ENCODE measurements at regions of chr6 and their contacts with region 1.

Region 1: DNA sequence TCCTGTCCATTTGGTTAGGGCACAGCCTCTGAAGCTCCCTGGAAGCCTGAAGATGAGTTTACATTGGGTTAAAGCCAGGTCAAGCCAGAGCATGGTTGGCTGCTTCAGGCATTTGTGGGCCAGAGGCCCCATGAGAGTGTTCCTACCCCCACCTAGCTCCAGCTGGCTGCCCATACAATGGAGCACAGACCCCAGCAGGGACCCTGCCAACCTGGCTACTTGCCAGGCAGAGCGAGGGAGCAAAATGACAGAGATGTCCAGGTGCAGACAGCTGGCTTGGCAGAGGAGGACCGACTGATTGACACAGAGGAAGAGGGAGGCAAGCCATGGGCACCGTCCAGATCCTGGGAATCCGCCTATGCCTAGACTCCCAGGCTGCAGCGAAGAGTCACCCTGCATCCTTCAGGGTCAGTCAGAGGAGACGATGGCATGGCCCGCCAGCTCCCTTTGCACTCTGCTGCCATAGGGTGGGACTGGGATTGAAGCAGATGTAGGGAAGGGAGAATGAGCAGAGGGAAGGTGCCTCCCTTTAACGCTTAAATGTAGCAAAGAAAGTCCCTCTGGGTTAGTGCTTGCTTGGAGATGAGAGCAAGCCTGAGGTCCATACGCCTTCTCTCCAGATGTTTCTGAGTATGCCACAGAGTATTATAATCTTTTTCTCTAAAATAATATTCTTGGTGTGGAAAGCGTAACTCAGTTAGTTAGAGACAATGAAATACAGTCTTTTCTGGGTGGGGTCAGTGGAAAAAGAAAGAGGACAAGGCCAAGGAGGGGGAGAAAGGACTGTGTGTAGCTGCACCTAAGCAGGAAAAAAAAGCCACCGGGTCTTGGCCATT is 77.6 kb upstream of the FYN start:
- DNase-seq: no peak
- H3K4me3 ChIP-seq: no peak overlapping the region
- H3K4me3 Mint-ChIP-seq: no peak overlapping the region
- H3K27ac ChIP-seq: no peak overlapping the region
- H3K27ac Mint-ChIP-seq: no peak overlapping the region
- H3K4me1 ChIP-seq: peaks cover 26 to 30% of the 10 kb centered on the region in 2 donors
- H3K4me1 Mint-ChIP-seq: peaks cover 26% of the 10 kb centered on the region
- H3K27me3 ChIP-seq: no peaks in the 10 kb centered on the region
- H3K27me3 Mint-ChIP-seq: no peaks in the 10 kb centered on the region
- CTCF ChIP-seq: no peak

Region 2: DNA sequence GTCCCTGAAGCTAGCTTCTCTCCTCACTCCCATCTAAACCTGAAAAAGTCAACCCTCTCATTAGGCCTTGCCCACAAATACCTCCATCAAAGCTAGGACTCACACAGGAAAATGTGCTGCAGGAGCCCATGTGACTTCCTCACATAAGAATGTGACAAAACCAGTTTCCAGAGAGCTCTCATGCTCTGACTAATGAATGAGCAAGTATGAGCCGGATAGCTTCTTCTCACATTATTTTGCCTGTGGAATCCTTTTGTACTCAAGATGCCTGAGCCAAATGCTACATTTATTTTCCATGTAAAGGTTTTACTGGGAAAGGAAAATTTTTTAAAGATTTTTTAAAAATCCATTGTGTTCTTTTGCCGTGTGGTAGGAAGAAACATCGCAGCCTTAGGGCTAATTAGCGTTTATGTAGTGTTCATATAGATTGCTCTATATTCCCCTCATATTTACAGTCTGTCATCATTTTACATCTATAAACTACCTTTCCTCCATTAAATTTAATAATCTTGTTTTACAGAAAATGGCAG is 34.4 kb after region 1 on chr6:
- intact Hi-C with region 1: loop called (anchors 5 to 10 kb)
- DNase-seq: peak; percentile 39 to 78 (median 47)
- H3K4me3 ChIP-seq: no peak overlapping the region
- H3K4me3 Mint-ChIP-seq: no peak overlapping the region
- H3K27ac ChIP-seq: no peak overlapping the region
- H3K27ac Mint-ChIP-seq: no peak overlapping the region
- H3K4me1 ChIP-seq: peaks cover 0 to 6% of the 10 kb centered on the region in 2 donors
- H3K4me1 Mint-ChIP-seq: peaks cover 17% of the 10 kb centered on the region
- H3K27me3 ChIP-seq: no peaks in the 10 kb centered on the region
- H3K27me3 Mint-ChIP-seq: peaks cover 0 to 1% (median 0%) of the 10 kb centered on the region in 3 donors
- CTCF ChIP-seq: no peak